ENCODE measurements at regions of chr9 and their contacts with region 1.

Region 1: GRCh38 chr9:118595719-118596305 is 773.4 kb downstream of the BRINP1 start:
- DNase-seq: peak; percentile 43 to 45
- H3K4me3 ChIP-seq: no peak overlapping the region
- H3K4me3 Mint-ChIP-seq: no peak overlapping the region
- H3K27ac Mint-ChIP-seq: no peak overlapping the region
- H3K4me1 ChIP-seq: no peaks in the 10 kb centered on the region
- H3K4me1 Mint-ChIP-seq: no peaks in the 10 kb centered on the region
- H3K27me3 ChIP-seq: no peaks in the 10 kb centered on the region
- H3K27me3 Mint-ChIP-seq: peaks cover 4% of the 10 kb centered on the region
- CTCF ChIP-seq: peak; percentile 37 to 48

Region 2: GRCh38 chr9:118643118-118643517 is 47.3 kb after region 1 on chr9:
- CTCF ChIA-PET with region 1: no interaction called
- POLR2A ChIA-PET with region 1: no interaction called
- intact Hi-C with region 1: no loop called
- DNase-seq: peak in 1 of 2 experiments; percentile 29
- H3K4me3 ChIP-seq: no peak overlapping the region
- H3K4me3 Mint-ChIP-seq: no peak overlapping the region
- H3K27ac Mint-ChIP-seq: no peak overlapping the region
- H3K4me1 ChIP-seq: no peaks in the 10 kb centered on the region
- H3K4me1 Mint-ChIP-seq: no peaks in the 10 kb centered on the region
- H3K27me3 ChIP-seq: no peaks in the 10 kb centered on the region
- H3K27me3 Mint-ChIP-seq: no peaks in the 10 kb centered on the region
- CTCF ChIP-seq: no peak

Region 3: GRCh38 chr9:118751848-118752223 is 156.0 kb after region 1 on chr9:
- CTCF ChIA-PET with region 1: interaction called, 3 read pairs
- POLR2A ChIA-PET with region 1: no interaction called
- intact Hi-C with region 1: loop called (anchors 5 kb)
- DNase-seq: no peak
- H3K4me3 ChIP-seq: no peak overlapping the region
- H3K4me3 Mint-ChIP-seq: no peak overlapping the region
- H3K27ac Mint-ChIP-seq: no peak overlapping the region
- H3K4me1 ChIP-seq: no peaks in the 10 kb centered on the region
- H3K4me1 Mint-ChIP-seq: no peaks in the 10 kb centered on the region
- H3K27me3 ChIP-seq: no peaks in the 10 kb centered on the region
- H3K27me3 Mint-ChIP-seq: no peaks in the 10 kb centered on the region
- CTCF ChIP-seq: no peak

Region 4: DNA sequence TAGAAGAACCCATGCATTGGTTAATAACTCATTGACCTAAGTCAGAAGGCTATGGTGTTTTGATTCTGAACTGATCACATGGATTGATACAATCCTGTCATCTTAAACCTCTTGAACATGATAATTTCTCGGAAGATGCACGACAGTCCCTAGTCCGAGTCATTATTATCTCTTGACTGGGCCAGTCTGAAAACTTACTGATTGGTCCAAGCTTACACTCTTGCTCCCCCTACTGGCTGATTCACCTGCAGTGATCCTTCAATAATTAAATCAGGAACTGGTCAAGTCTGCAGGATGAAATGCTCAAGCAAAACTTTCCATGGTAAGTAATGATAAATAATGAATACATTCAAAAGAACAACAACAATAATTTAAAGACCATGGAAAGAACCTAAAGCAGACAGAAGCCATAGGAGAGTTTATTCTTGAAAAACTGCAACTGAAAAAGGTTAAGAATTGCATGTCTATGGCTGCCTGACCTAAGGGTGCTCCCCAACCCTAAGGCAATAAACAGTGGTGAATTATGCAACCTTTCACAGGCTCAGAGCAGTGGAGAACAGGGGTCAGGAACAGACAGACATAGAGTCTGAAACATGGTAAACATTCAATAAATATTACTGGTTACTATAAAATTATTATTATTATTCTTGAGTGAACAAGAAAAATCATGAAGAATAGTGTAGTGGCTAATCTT is 694.1 kb after region 1 on chr9:
- CTCF ChIA-PET with region 1: no interaction called
- POLR2A ChIA-PET with region 1: no interaction called
- intact Hi-C with region 1: loop called (anchors 2 kb)
- DNase-seq: peak; percentile 46 to 63
- H3K4me3 ChIP-seq: no peak overlapping the region
- H3K4me3 Mint-ChIP-seq: no peak overlapping the region
- H3K27ac Mint-ChIP-seq: no peak overlapping the region
- H3K4me1 ChIP-seq: no peaks in the 10 kb centered on the region
- H3K4me1 Mint-ChIP-seq: no peaks in the 10 kb centered on the region
- H3K27me3 ChIP-seq: no peaks in the 10 kb centered on the region
- H3K27me3 Mint-ChIP-seq: peaks cover 5% of the 10 kb centered on the region
- CTCF ChIP-seq: peak; percentile 57 to 60

Measured in Caco-2 (cell line).